CD4-positive, alpha-beta memory T cell (primary cell): ENCODE measurements at regions of chr17 and their contacts with region 1.

Region 1: DNA sequence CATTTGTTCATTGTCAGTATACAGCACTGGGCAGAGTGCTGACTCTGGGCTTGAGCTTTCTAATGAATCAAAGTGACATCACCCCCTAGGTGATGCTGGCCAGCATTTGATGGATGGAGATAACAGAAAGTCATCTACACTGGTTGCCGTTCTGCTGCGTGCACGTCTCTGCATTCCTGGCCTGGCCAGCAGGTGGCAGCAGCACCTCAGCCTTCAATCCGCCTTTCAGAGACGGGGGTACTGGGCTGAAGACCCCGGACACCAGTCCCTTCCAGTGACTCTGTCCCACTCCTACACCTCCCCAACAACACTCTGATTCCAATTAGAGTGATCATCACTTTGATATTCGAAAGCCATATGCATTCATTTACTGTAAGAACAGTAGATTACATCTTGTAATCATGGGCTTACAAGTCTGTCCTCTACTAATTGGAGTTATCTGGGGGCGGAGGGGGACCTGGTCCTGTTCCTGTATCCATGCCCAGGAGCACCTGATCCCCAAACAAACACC is 6.0 kb downstream of the CPSF4L start:
- DNase-seq: peak in 4 of 5 donors; percentile 32 to 49 (median 40)
- H3K4me3 ChIP-seq: no peak overlapping the region
- H3K4me3 Mint-ChIP-seq: no peak overlapping the region
- H3K27ac ChIP-seq: no peak overlapping the region
- H3K27ac Mint-ChIP-seq: peak overlapping the region in 2 of 7 donors; percentile 36 to 58
- H3K4me1 ChIP-seq: no peaks in the 10 kb centered on the region
- H3K4me1 Mint-ChIP-seq: peaks cover 0 to 5% (median 2%) of the 10 kb centered on the region in 4 donors
- H3K27me3 ChIP-seq: no peaks in the 10 kb centered on the region
- H3K27me3 Mint-ChIP-seq: peaks cover 0 to 2% of the 10 kb centered on the region in 2 donors

Region 2: GRCh38 chr17:73192894-73193701 is 62.6 kb before region 1 on chr17 and contains the start of gene COG1:
- CTCF ChIA-PET with region 1: interaction called, 6 read pairs
- POLR2A ChIA-PET with region 1: no interaction called
- intact Hi-C with region 1: loop called (anchors 1 kb)
- DNase-seq: peak; percentile 68 to 91 (median 76)
- H3K4me3 ChIP-seq: peak within 1 kb of the TSS; percentile 71 to 84
- H3K4me3 Mint-ChIP-seq: peak within 1 kb of the TSS; percentile 97 to 99 (median 98)
- H3K27ac ChIP-seq: peak within 1 kb of the TSS; percentile 81
- H3K27ac Mint-ChIP-seq: peak within 1 kb of the TSS; percentile 79 to 99 (median 98)
- H3K4me1 ChIP-seq: peaks cover 22% of the 10 kb centered on the region
- H3K4me1 Mint-ChIP-seq: peaks cover 21 to 45% (median 28%) of the 10 kb centered on the region in 4 donors
- H3K27me3 ChIP-seq: no peaks in the 10 kb centered on the region
- H3K27me3 Mint-ChIP-seq: no peaks in the 10 kb centered on the region
- total RNA-seq, gene COG1: 76.2 to 81.6 TPM

Region 3: GRCh38 chr17:73376636-73377035 is 120.9 kb after region 1 on chr17:
- CTCF ChIA-PET with region 1: interaction called, 185 read pairs
- POLR2A ChIA-PET with region 1: no interaction called
- intact Hi-C with region 1: no loop called
- DNase-seq: no peak
- H3K4me3 ChIP-seq: no peak overlapping the region
- H3K4me3 Mint-ChIP-seq: no peak overlapping the region
- H3K27ac ChIP-seq: no peak overlapping the region
- H3K27ac Mint-ChIP-seq: no peak overlapping the region
- H3K4me1 ChIP-seq: no peaks in the 10 kb centered on the region
- H3K4me1 Mint-ChIP-seq: no peaks in the 10 kb centered on the region
- H3K27me3 ChIP-seq: no peaks in the 10 kb centered on the region
- H3K27me3 Mint-ChIP-seq: peaks cover 2 to 4% of the 10 kb centered on the region in 2 donors

Region 4: DNA sequence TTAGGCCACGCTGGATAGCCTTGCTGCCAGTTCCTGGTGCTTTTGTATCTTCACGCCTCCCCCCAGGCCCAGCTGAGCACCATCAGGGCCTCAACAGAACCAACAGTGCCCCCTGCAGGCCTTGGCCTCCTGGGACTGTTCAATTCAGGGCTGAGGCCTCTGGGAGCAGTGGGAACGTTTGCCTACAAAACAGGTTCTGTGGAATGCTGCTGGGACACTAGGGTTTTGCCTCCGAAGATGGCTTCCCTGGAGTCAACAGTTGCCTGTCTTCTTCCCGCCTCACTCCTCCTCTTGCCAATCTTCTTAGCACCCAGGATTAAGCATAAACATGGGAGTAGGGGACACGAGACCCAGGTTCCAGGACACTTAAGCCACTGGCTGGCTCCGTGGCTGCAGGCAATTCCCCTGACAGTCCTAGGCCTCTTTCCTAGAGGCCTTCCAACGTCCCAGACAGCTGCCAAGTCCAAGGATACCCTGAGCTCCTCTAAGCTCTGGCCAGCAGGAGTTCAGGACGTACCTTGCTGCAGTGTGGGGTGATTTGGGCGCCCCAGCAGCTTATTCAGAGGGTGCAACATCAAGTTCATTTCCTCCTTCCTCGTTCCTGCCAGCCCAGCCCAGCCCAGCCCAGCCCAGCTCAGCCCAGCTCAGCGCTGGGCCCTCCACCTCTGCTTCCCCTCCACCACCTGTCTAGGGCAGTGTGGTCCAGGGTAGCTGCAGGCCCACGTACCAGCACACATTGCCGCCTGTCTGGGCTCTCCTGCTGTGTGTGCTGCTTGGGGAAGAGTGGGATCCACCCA is 701.1 kb after region 1 on chr17:
- CTCF ChIA-PET with region 1: no interaction called
- POLR2A ChIA-PET with region 1: no interaction called
- intact Hi-C with region 1: loop called (anchors 5 kb)
- DNase-seq: peak; percentile 38 to 57 (median 44)
- H3K4me3 ChIP-seq: no peak overlapping the region
- H3K4me3 Mint-ChIP-seq: peak overlapping the region in 1 of 8 donors; percentile 24
- H3K27ac ChIP-seq: no peak overlapping the region
- H3K27ac Mint-ChIP-seq: no peak overlapping the region
- H3K4me1 ChIP-seq: peaks cover 18% of the 10 kb centered on the region
- H3K4me1 Mint-ChIP-seq: peaks cover 0 to 8% (median 3%) of the 10 kb centered on the region in 4 donors
- H3K27me3 ChIP-seq: peaks cover 3% of the 10 kb centered on the region
- H3K27me3 Mint-ChIP-seq: peaks cover 3 to 5% of the 10 kb centered on the region in 2 donors